Activated CD8-positive, alpha-beta T cell treated with anti-CD3 and anti-CD28 coated beads, Interleukin-2, amount 10 ng/mL, durations not matched to agents 7 days and 5 days (primary cell): ENCODE measurements at regions of chr22 and their contacts with region 1.

Region 1: GRCh38 chr22:40128989-40129388 is 48.7 kb upstream of the TNRC6B start:
- DNase-seq: peak; percentile 75
- ATAC-seq: peak; percentile 94
- H3K4me3 Mint-ChIP-seq: peak overlapping the region; percentile 59
- H3K27ac Mint-ChIP-seq: peak overlapping the region; percentile 90
- H3K4me1 Mint-ChIP-seq: peaks cover 60% of the 10 kb centered on the region
- H3K27me3 Mint-ChIP-seq: no peaks in the 10 kb centered on the region

Region 2: DNA sequence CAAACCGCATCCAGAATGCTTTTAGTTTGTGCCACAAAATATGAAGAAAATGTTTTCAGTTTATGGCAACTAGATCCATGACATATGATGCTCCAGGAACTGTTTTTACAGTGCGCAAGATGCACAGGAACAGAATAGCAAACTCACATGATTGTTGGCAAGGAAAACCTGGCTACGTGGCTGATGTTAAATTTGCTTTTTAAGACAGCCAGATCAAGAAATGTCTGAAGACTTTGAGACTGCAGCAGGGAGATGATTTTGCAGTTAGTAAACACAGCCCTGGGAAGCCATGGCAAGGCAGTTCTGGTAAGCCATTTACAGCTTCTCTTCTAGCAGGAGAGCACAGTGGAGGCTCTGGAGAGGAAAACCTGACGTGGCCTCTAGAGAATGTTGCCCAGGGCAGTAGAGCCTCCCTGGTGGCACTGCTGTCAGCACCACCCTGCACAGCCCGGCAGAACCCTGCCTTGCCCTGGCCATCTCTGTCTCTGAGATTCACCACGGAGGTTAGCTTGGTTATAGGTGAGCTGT is 21.1 kb before region 1 on chr22:
- CTCF ChIA-PET with region 1: interaction called, 11 read pairs
- POLR2A ChIA-PET with region 1: interaction called, 4 read pairs
- DNase-seq: peak; percentile 59
- ATAC-seq: peak; percentile 92
- H3K4me3 Mint-ChIP-seq: peak overlapping the region; percentile 78
- H3K27ac Mint-ChIP-seq: peak overlapping the region; percentile 93
- H3K4me1 Mint-ChIP-seq: peaks cover 58% of the 10 kb centered on the region
- H3K27me3 Mint-ChIP-seq: no peaks in the 10 kb centered on the region